GM12878 (cell line): ENCODE measurements at regions of chr15 and their contacts with region 1.

Region 1: DNA sequence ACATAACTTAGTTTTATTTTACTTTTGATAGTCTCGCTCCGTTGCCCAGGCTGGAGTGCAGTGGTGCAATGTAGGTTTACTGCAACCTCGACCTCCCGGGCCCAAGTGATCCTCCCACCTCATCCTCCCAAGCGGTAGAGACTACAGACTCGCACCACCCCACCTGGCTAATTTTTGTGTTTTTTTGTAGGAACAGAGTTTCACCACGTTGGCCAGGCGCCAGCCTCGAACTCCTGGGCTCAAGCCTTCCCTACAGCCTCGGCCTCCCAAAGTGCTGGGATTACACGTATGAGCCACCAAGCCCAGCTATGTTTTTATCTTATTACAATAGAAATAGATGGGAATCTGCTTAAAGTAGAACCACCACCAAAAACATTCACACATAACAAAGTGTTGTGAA is 2.9 kb downstream of the RNU5A-1 start:
- DNase-seq: no peak
- ATAC-seq: no peak
- H3K4me3 ChIP-seq: no peak overlapping the region
- H3K27ac ChIP-seq: no peak overlapping the region
- H3K4me1 ChIP-seq: peaks cover 9% of the 10 kb centered on the region
- H3K27me3 ChIP-seq: no peaks in the 10 kb centered on the region
- CTCF ChIP-seq: no peak
- EP300 ChIP-seq: no peak
- POLR2A ChIP-seq: no peak
- RAD21 ChIP-seq: no peak

Region 2: DNA sequence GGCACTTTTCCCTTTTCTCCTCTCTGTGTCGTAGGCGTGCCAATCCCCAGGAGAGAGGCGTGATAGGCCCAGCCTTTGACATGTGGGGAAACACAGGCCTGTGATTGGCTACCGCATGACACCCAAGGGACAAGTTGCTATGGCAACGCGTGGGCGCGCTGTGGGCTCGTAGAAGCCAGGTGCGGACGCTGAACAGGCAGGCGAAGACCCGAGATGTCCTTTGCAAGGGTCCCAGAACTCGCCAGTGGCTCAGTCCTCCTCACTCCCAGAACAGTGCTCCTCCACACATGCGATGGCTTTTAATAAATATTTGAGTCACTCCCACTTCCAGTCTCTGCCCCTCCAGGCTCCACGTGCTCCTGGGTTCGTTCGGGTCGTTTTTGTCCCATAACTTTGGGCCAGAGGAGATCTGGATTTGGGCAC is 249.3 kb before region 1 on chr15:
- CTCF ChIA-PET with region 1: interaction called, 10 read pairs
- POLR2A ChIA-PET with region 1: interaction called, 3 read pairs
- RAD21 ChIA-PET with region 1: no interaction called
- SMC1A ChIA-PET with region 1: interaction called, 11 read pairs
- in situ Hi-C with region 1: loop called (anchors 5 kb)
- intact Hi-C with region 1: loop called (anchors 2 kb)
- DNase-seq: peak; percentile 90
- ATAC-seq: peak; percentile 97
- H3K4me3 ChIP-seq: peak overlapping the region; percentile 53; the same call in 1 of the 2 replicates
- H3K27ac ChIP-seq: no peak overlapping the region
- H3K4me1 ChIP-seq: peaks cover 8% of the 10 kb centered on the region
- H3K27me3 ChIP-seq: no peaks in the 10 kb centered on the region
- CTCF ChIP-seq: no peak
- EP300 ChIP-seq: no peak
- POLR2A ChIP-seq: no peak
- RAD21 ChIP-seq: no peak

Region 3: GRCh38 chr15:65476903-65477302 is 178.2 kb after region 1 on chr15:
- CTCF ChIA-PET with region 1: no interaction called
- POLR2A ChIA-PET with region 1: no interaction called
- RAD21 ChIA-PET with region 1: no interaction called
- SMC1A ChIA-PET with region 1: no interaction called
- in situ Hi-C with region 1: no loop called
- intact Hi-C with region 1: no loop called
- DNase-seq: no peak
- ATAC-seq: no peak
- H3K4me3 ChIP-seq: no peak overlapping the region
- H3K27ac ChIP-seq: no peak overlapping the region
- H3K4me1 ChIP-seq: no peaks in the 10 kb centered on the region
- H3K27me3 ChIP-seq: no peaks in the 10 kb centered on the region
- CTCF ChIP-seq: no peak
- EP300 ChIP-seq: no peak
- POLR2A ChIP-seq: no peak
- RAD21 ChIP-seq: no peak